ENCODE measurements at regions of chr1 and their contacts with region 1.

Region 1: GRCh38 chr1:50181027-50181663 is 72.4 kb downstream of the ELAVL4 start:
- DNase-seq: peak in 1 of 2 donors; percentile 15
- ATAC-seq: peak; percentile 60 to 83
- H3K4me3 ChIP-seq: no peak overlapping the region
- H3K27ac ChIP-seq: no peak overlapping the region
- H3K4me1 ChIP-seq: peaks cover 0 to 8% of the 10 kb centered on the region in 2 donors
- H3K27me3 ChIP-seq: no peaks in the 10 kb centered on the region
- CTCF ChIP-seq: no peak
- POLR2A ChIP-seq: no peak

Region 2: GRCh38 chr1:50109647-50110075 is 71.5 kb before region 1 on chr1:
- in situ Hi-C with region 1: no loop called
- intact Hi-C with region 1: no loop called
- DNase-seq: no peak
- ATAC-seq: no peak
- H3K4me3 ChIP-seq: no peak overlapping the region
- H3K27ac ChIP-seq: no peak overlapping the region
- H3K4me1 ChIP-seq: no peaks in the 10 kb centered on the region
- H3K27me3 ChIP-seq: peaks cover 17 to 41% (median 40%) of the 10 kb centered on the region in 3 donors
- CTCF ChIP-seq: no peak
- POLR2A ChIP-seq: no peak

Region 3: GRCh38 chr1:50123071-50123470 is 58.1 kb before region 1 on chr1:
- in situ Hi-C with region 1: loop called in 1 of 4 experiments (anchors 10 kb)
- intact Hi-C with region 1: no loop called
- DNase-seq: no peak
- ATAC-seq: no peak
- H3K4me3 ChIP-seq: no peak overlapping the region
- H3K27ac ChIP-seq: no peak overlapping the region
- H3K4me1 ChIP-seq: no peaks in the 10 kb centered on the region
- H3K27me3 ChIP-seq: no peaks in the 10 kb centered on the region
- CTCF ChIP-seq: no peak
- POLR2A ChIP-seq: no peak